ENCODE measurements at regions of chr7 and their contacts with region 1.

Region 1: DNA sequence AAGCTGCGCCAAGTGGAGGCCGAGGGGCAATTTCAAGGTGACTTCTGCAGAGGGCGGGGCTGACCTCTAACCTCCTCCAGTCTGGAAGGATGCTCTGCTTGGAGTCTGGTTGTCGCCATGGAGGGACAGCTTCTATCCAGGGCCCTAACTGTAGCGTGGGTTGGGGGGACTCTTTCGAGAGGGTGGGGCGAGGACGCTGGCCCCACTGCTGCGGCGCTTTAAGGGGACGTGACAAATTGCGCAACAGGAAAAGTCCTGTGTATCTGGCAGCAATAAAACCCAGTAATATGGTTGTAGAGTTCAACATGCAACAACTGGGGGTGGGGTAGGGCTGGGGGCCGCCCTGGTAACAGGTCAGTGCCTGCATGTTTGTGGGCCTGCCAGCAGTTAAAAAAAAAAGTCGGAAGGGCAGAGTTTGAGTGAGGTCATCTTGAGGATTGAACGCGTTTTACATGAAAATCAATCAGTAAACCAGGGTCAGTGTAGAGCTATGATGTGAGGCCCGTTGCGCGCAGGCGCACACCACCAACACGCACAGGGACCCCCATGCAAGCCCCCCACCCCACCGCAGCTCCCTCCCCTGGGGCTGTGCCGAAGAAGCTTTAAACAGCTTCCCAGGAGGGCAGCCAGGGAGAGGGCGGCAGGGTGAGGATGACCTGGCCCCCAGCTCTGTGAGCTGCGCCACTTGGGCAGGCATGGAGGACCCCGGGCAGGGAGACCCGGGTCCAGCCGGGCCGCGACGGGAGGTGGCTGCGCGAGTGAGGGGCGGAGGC is 4.3 kb downstream of the SHH start:
- DNase-seq: no peak
- ATAC-seq: no peak
- H3K4me3 ChIP-seq: no peak overlapping the region
- H3K27ac ChIP-seq: no peak overlapping the region
- H3K4me1 ChIP-seq: peaks cover 5 to 22% of the 10 kb centered on the region in 2 experiments; a peak in 3 of 4 replicates
- H3K27me3 ChIP-seq: 0 out of 2 replicates have a peak, but pooled peaks cover 5% of the 10 kb centered on the region
- CTCF ChIP-seq: no peak
- POLR2A ChIP-seq: no peak
- RAD21 ChIP-seq: no peak

Region 2: GRCh38 chr7:155907450-155908200 is 99.7 kb after region 1 on chr7:
- CTCF ChIA-PET with region 1: no interaction called
- POLR2A ChIA-PET with region 1: no interaction called
- RAD21 ChIA-PET with region 1: no interaction called
- intact Hi-C with region 1: no loop called
- DNase-seq: no peak
- ATAC-seq: no peak
- H3K4me3 ChIP-seq: no peak overlapping the region
- H3K27ac ChIP-seq: no peak overlapping the region
- H3K4me1 ChIP-seq: peaks cover 2 to 11% of the 10 kb centered on the region in 2 experiments; a peak in 2 of 4 replicates
- H3K27me3 ChIP-seq: no peaks in the 10 kb centered on the region
- CTCF ChIP-seq: no peak
- POLR2A ChIP-seq: no peak
- RAD21 ChIP-seq: no peak

Region 3: DNA sequence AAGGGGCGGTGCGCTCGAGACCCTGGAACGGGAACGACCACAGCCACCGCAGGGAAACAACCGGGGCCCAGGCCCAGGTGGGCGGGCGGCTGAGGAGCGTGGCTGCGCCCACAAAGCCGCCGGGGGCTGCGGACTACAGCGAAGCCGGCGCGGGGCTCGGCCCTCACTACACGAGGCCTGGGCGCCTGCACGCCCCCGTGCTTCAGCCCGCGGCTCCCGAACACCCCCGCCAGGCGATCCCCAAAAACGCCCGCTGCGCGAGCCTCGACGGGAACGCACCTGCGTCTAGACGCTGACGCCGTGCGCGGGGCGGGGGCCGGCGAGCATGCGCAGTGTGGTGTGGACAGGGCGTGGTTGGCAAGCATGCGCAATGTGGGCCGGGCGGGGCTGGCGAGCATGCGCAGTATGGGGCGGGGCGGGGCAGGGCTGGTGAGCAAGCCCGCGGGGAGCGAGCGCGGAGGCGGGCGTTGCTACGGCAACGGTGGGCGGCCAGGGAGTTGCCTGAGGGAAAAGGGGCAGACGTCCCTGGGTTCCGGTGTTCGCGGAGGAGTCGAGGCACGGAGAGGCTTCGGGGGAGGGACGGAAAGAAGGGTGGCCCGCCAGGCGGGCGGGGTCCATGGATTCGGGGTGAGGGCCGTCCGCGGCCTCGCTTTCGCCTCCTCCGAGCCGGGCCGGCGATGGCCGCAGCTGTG is 832.4 kb after region 1 on chr7 and contains the start of gene RNF32:
- CTCF ChIA-PET with region 1: no interaction called
- POLR2A ChIA-PET with region 1: no interaction called
- RAD21 ChIA-PET with region 1: no interaction called
- intact Hi-C with region 1: loop called (anchors 2 kb)
- DNase-seq: peak; percentile 82
- ATAC-seq: peak; percentile 89
- H3K4me3 ChIP-seq: peak within 1 kb of the TSS; percentile 68 to 78
- H3K27ac ChIP-seq: peak within 1 kb of the TSS; percentile 74
- H3K4me1 ChIP-seq: peaks cover 4 to 19% of the 10 kb centered on the region in 2 experiments; a peak in 3 of 4 replicates
- H3K27me3 ChIP-seq: no peaks in the 10 kb centered on the region
- CTCF ChIP-seq: no peak
- POLR2A ChIP-seq: no peak
- RAD21 ChIP-seq: no peak
- total RNA-seq, gene RNF32: 3.4 TPM